ENCODE measurements at regions of chr14 and their contacts with region 1.

Region 1: DNA sequence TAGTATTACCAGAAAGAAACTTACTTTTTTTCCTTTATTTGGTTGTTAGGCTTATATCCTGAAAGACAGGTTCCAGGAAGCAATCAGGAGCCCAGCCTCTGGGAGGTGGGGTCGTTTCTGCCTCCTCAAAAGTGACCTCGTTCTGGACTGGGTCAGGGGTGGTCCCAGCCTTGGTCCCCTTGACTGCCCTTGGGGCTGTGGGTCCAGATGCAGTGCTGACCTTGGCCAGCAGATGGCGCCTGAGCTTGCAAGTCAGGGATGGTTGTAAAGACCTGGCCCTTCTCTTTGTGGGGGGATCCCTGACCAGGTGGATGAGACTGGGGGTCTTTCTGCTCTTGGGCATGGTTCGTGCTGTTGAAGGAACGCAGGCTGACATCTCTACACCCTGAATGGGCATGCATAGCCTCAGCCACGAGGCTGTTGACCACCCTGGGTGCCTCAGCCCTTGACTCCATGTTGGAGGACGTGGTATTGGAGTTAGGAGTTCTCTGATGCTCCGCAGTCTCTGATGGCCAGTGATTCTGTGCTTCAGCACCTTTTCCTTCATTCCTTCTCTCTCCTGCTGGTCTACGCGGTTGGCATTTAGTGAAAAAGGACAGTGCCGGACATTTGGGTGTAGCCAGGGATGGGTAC is 62.4 kb downstream of the ADCK1 start:
- DNase-seq: peak; percentile 85
- CTCF ChIP-seq: peak; percentile 98

Region 2: DNA sequence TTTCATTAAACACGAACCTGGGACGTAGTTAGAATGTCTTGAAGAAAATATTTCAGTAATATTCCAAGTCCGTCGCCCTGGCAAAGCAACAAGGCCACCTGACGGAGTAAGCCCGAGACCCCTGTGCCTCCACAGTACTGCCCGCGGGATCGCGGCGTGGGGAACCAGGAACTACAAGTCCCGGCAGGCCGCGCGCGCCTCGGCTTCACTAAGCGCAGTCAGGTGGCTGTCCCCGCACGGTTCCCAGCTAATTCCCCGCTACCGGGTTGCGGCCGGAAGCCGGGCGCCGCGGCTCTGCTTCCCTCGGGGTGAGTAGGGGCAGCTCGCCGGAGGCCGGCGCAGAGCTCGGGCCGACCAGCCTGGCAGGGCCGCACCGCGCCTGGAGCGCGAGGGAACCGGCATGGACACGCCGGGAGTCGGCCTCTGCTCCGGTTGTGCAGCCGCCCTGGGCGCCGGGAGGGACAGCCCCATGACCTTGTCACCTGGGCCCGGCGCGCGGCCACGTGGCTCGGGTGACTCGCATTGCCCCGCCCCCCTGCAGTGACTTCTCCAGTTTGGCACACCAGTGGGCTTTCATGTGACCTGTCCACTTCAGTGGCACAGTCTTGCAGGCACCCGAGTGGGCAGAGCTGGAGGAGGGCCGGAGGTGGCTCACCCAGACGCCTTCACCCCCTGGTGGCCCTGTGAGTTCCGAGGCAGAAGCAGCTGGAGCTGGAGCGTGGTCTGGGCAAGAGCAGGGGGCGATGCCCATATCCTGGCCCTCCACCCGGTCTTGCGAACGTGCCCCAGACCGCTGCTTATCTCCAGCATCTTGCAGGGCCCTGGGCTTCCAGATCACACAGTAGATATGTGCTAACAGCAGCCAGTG is 62.2 kb before region 1 on chr14 and contains the start of gene ADCK1:
- CTCF ChIA-PET with region 1: no interaction called
- POLR2A ChIA-PET with region 1: no interaction called
- DNase-seq: peak; percentile 90
- CTCF ChIP-seq: no peak

Region 3: GRCh38 chr14:77848031-77848430 is 14.2 kb before region 1 on chr14:
- CTCF ChIA-PET with region 1: interaction called, 49 read pairs
- POLR2A ChIA-PET with region 1: no interaction called
- DNase-seq: no peak
- CTCF ChIP-seq: no peak

Region 4: GRCh38 chr14:77882098-77882497 is 19.8 kb after region 1 on chr14:
- CTCF ChIA-PET with region 1: interaction called, 14 read pairs
- POLR2A ChIA-PET with region 1: no interaction called
- DNase-seq: no peak
- CTCF ChIP-seq: no peak

Region 5: DNA sequence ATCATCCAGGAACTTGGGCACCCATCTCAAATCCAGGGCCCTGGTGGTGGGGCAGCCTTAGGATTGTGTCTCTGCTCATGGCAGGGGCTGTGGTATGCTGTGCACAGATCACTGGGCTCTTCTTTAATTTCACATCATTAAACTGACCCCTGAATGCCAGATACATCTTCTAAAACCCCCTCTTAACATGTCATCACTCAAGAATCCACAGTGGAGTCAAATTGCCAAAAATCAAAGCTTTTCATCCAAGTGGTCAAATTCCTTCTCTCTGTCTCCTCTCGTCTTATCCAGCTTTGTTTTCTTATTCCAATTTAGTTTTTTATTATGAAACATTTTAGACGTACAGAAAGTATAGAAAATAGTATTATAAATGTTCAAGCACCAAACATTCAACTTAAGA is 35.1 kb after region 1 on chr14:
- CTCF ChIA-PET with region 1: interaction called, 11 read pairs
- POLR2A ChIA-PET with region 1: no interaction called
- DNase-seq: no peak
- CTCF ChIP-seq: no peak

Region 6: DNA sequence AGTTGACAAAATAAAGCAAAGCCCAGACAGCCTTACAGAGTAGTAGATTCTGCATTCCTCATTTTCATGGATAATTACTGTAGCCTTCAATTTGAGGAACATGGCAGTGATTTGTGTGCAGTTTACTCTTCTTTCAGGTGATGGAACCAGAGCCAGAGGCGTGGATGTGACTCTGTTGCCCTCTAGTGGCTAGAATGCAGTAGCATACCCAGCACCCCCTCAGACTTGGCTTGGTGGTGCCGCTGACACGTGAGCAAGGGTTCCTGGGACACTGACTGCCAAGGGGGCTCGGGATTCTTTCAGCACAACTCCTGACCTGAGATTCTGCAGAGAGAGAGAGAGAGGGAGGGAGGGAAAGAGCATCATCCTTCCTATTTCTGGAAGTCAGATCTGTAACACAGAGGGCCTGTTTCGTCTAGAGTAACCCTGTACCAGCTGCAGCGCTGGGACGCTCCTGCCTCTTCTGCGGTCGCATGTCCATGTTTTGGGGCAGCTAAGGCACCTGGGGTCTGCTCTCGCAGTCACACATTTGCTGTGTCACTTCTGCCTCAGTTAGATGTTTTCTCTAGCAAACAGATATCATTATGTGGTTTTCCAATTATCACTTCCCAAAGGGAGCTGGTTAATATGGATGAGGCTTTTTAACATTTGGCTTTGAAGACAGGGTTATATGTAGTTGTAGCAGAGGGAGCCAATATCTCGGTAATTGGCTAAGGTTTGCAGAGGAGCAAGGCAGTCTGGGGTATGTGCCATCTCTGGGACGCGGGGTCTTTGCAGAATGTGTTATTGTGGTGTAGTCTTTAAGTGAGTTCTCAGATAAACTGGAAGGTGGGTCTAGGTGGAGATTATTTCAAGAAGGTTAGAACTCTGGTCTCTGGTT is 736.0 kb after region 1 on chr14:
- CTCF ChIA-PET with region 1: interaction called, 48 read pairs
- POLR2A ChIA-PET with region 1: no interaction called
- DNase-seq: peak; percentile 64
- CTCF ChIP-seq: peak; percentile 89

Measured in GM10248 (cell line).